Caco-2 (cell line): ENCODE measurements at regions of chr19 and their contacts with region 1.

Region 1: GRCh38 chr19:45059278-45059965 is 16.9 kb downstream of the ZNF296 start:
- DNase-seq: peak; percentile 82 to 89
- H3K4me3 ChIP-seq: no peak overlapping the region
- H3K4me3 Mint-ChIP-seq: no peak overlapping the region
- H3K27ac Mint-ChIP-seq: no peak overlapping the region
- H3K4me1 ChIP-seq: no peaks in the 10 kb centered on the region
- H3K4me1 Mint-ChIP-seq: peaks cover 8% of the 10 kb centered on the region
- H3K27me3 ChIP-seq: no peaks in the 10 kb centered on the region
- H3K27me3 Mint-ChIP-seq: no peaks in the 10 kb centered on the region
- CTCF ChIP-seq: peak; percentile 90 to 95

Region 2: GRCh38 chr19:44954824-44955586 is 104.4 kb before region 1 on chr19 and contains the start of gene CLPTM1:
- CTCF ChIA-PET with region 1: no interaction called
- POLR2A ChIA-PET with region 1: no interaction called
- intact Hi-C with region 1: loop called (anchors 1 kb)
- DNase-seq: peak; percentile 97 to 98
- H3K4me3 ChIP-seq: peak within 1 kb of the TSS; percentile 93
- H3K4me3 Mint-ChIP-seq: peak within 1 kb of the TSS; percentile 99
- H3K27ac Mint-ChIP-seq: peak within 1 kb of the TSS; percentile 98
- H3K4me1 ChIP-seq: peaks cover 13% of the 10 kb centered on the region
- H3K4me1 Mint-ChIP-seq: peaks cover 16% of the 10 kb centered on the region
- H3K27me3 ChIP-seq: no peaks in the 10 kb centered on the region
- H3K27me3 Mint-ChIP-seq: no peaks in the 10 kb centered on the region
- CTCF ChIP-seq: no peak
- total RNA-seq, gene CLPTM1: 144 and 159 TPM in 2 replicates

Region 3: GRCh38 chr19:45001087-45001739 is 58.2 kb before region 1 on chr19 and contains the start of gene RELB:
- CTCF ChIA-PET with region 1: interaction called, 19 read pairs
- POLR2A ChIA-PET with region 1: no interaction called
- intact Hi-C with region 1: no loop called
- DNase-seq: peak; percentile 94 to 99
- H3K4me3 ChIP-seq: peak within 1 kb of the TSS; percentile 91
- H3K4me3 Mint-ChIP-seq: peak within 1 kb of the TSS; percentile 94
- H3K27ac Mint-ChIP-seq: peak within 1 kb of the TSS; percentile 89
- H3K4me1 ChIP-seq: peaks cover 10% of the 10 kb centered on the region
- H3K4me1 Mint-ChIP-seq: peaks cover 8% of the 10 kb centered on the region
- H3K27me3 ChIP-seq: no peaks in the 10 kb centered on the region
- H3K27me3 Mint-ChIP-seq: no peaks in the 10 kb centered on the region
- CTCF ChIP-seq: no peak
- total RNA-seq, gene RELB: 6.3 and 10.2 TPM in 2 replicates

Region 4: DNA sequence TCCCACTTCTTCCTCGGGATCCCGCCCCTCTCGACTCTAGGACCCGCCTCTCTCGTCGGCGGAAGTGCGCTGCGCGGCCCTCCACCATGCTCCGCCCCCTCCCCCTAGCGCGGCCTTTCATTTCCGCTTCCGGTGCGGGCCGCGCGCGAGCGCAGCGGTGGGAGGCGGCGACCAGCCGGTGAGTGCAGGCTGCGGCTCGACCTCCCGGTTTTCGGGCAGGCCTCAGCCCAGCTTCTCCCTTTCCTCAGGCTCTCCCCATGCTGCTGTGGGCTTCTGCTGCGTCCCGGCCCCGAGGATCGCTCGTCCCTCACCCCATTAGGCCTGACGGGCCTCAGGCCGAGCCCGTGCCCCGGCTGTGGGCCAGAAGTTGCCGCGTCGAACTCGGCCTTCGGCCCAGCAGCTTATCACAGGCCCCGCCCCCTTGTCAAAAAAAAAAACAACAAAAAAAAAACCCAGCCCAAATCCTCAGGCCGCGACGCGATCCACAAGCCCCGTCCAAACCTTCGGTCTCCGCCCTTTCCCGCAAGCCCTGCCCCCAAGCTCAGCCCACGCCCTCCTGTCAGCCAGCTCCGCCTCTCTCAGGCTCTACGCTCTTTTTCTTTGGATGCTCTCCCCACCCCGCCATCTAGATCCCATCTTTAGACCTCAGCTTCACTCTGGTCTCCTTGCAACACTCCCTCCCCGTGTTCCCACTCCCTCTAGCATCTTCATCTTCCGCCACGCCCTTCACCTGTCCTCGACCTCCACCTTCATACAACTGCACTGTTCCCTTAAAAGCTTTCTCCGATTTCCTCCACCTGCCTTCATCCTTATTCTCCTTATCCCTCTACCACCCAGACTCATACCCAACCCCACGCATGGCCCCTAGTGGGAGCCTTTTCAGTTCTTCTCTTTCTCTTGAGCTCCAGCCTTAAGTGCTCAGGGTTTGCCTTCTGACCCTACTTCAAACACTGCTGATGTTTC is 20.2 kb before region 1 on chr19 and contains the start of gene CLASRP:
- CTCF ChIA-PET with region 1: interaction called, 23 read pairs
- POLR2A ChIA-PET with region 1: no interaction called
- intact Hi-C with region 1: loop called (anchors 2 kb)
- DNase-seq: peak; percentile 91 to 94
- H3K4me3 ChIP-seq: peak within 1 kb of the TSS; percentile 55
- H3K4me3 Mint-ChIP-seq: peak within 1 kb of the TSS; percentile 87
- H3K27ac Mint-ChIP-seq: peak within 1 kb of the TSS; percentile 77
- H3K4me1 ChIP-seq: peaks cover 9% of the 10 kb centered on the region; the same call in 1 of the 2 replicates
- H3K4me1 Mint-ChIP-seq: peaks cover 9% of the 10 kb centered on the region
- H3K27me3 ChIP-seq: no peaks in the 10 kb centered on the region
- H3K27me3 Mint-ChIP-seq: no peaks in the 10 kb centered on the region
- CTCF ChIP-seq: no peak
- total RNA-seq, gene CLASRP: 104 and 111 TPM in 2 replicates

Region 5: GRCh38 chr19:45082170-45082569 is 22.7 kb after region 1 on chr19:
- CTCF ChIA-PET with region 1: no interaction called
- POLR2A ChIA-PET with region 1: no interaction called
- intact Hi-C with region 1: no loop called
- DNase-seq: no peak
- H3K4me3 ChIP-seq: no peak overlapping the region
- H3K4me3 Mint-ChIP-seq: peak overlapping the region; percentile 34
- H3K27ac Mint-ChIP-seq: no peak overlapping the region
- H3K4me1 ChIP-seq: peaks cover 14% of the 10 kb centered on the region
- H3K4me1 Mint-ChIP-seq: peaks cover 15% of the 10 kb centered on the region
- H3K27me3 ChIP-seq: no peaks in the 10 kb centered on the region
- H3K27me3 Mint-ChIP-seq: no peaks in the 10 kb centered on the region
- CTCF ChIP-seq: no peak